ENCODE measurements at regions of chr4 and their contacts with region 1.

Region 1: GRCh38 chr4:3346146-3346545 is 53.3 kb downstream of the RGS12 start:
- DNase-seq: no peak

Region 2: GRCh38 chr4:3421470-3421869 is 75.3 kb after region 1 on chr4:
- intact Hi-C with region 1: no loop called
- DNase-seq: peak in 4 of 10 donors; percentile 22 to 82 (median 72)

Region 3: GRCh38 chr4:3480528-3481112 is 134.5 kb after region 1 on chr4:
- intact Hi-C with region 1: loop called (anchors 2 kb)
- DNase-seq: peak; percentile 60 to 97 (median 84)